K562 (cell line): ENCODE measurements at regions of chr6 and their contacts with region 1.

Region 1: DNA sequence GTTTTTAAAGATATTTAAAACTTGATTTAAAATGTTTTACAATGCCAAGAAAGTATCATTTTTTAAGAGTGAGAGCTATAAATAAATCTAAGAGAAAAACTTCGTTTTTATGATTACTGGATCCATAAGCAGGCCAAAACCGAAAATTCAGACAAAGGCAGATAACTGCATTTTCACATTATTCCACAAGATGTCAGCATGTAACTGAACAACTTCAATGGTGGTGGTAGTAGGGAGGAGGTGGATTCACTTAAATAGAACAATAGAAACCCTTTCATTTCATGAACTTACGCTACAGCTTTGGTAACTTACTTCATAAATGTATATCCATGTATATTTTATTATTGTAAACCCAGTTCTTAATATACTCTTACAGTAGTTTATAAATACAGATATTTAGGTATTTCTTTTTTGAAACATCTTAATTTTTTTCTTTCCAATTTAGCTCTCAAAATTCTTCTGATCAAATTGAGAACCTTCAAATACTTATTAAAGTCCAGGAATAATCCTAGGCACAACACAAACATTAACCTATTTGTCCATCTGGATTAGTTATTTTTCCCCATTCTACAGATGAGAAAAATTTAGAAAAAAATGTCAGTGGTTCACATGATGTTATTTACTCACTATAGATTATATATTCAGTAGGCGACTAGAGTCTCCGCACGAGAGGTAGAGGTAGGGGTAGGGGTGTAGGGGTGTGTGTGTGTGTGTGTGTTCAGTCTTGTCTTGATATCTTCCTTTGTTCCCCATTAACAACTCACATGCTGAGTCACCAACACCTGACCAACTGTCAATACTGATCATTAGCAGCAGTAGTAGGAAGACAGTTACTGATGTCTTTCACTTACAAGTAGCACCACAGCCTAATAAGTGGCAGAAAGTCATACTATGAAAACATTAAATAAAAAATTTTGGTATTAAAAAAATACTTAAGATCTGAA is 111.5 kb downstream of the ARHGAP18 start:
- DNase-seq: peak; percentile 52 to 75 (median 60)
- ATAC-seq: peak; percentile 91
- H3K4me3 ChIP-seq: no peak overlapping the region
- H3K27ac ChIP-seq: no peak overlapping the region
- H3K4me1 ChIP-seq: 0 out of 5 replicates have a peak, but pooled peaks cover 0 to 4% of the 10 kb centered on the region in 2 experiments
- H3K27me3 ChIP-seq: no peaks in the 10 kb centered on the region
- CTCF ChIP-seq: peak; percentile 70 to 91 (median 71); a peak in 5 of 6 replicates
- EP300 ChIP-seq: no peak
- POLR2A ChIP-seq: no peak
- RAD21 ChIP-seq: peak; percentile 97

Region 2: GRCh38 chr6:129635396-129636130 is 37.0 kb after region 1 on chr6:
- CTCF ChIA-PET with region 1: no interaction called
- POLR2A ChIA-PET with region 1: no interaction called
- in situ Hi-C with region 1: no loop called
- intact Hi-C with region 1: no loop called
- DNase-seq: no peak
- ATAC-seq: no peak
- H3K4me3 ChIP-seq: no peak overlapping the region
- H3K27ac ChIP-seq: no peak overlapping the region
- H3K4me1 ChIP-seq: no peaks in the 10 kb centered on the region; a peak in 1 of 5 replicates
- H3K27me3 ChIP-seq: no peaks in the 10 kb centered on the region
- CTCF ChIP-seq: no peak
- EP300 ChIP-seq: no peak
- POLR2A ChIP-seq: no peak
- RAD21 ChIP-seq: no peak

Region 3: DNA sequence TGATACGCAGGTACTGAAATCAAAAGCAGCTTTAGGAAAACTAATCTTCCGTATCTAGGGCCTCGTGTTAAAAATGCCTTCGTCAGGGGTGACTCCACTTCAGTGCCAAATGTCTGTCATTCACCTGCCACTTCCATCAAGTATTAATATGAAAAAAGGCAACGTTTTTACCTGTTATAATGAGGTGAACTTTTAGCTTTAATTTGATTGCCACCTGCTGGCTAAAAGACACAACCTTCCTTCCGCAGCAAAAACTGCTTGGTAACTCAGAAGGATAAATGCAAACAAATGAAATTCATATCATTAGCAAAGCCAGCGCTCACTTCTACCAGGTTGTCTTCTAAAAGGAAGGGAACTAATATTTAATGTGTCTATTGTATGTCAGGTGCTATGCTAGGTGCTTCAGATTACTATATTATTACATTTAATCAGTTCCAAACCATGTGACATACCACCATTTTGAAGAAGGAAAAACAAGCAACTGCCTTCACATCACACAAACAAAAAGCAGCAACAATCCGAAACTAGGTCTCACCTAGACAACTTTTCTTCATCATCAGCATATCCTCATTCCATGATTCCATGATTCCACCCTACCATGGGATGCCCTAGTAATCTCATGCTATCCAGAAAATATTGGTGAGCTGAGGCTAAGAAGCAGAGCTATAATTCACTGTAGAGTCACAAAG is 132.1 kb after region 1 on chr6:
- CTCF ChIA-PET with region 1: interaction called, 27 read pairs
- POLR2A ChIA-PET with region 1: interaction called, 3 read pairs
- in situ Hi-C with region 1: no loop called
- intact Hi-C with region 1: loop called (anchors 1 kb)
- DNase-seq: peak in 2 of 4 experiments; percentile 18 to 69
- ATAC-seq: peak; percentile 75
- H3K4me3 ChIP-seq: no peak overlapping the region
- H3K27ac ChIP-seq: peak overlapping the region; percentile 79
- H3K4me1 ChIP-seq: peaks cover 10 to 26% of the 10 kb centered on the region in 2 experiments; a peak in 4 of 5 replicates
- H3K27me3 ChIP-seq: no peaks in the 10 kb centered on the region
- CTCF ChIP-seq: peak; percentile 61 to 75 (median 62); a peak in 4 of 6 replicates
- EP300 ChIP-seq: no peak; the same call in 1 of the 2 replicates
- POLR2A ChIP-seq: no peak
- RAD21 ChIP-seq: peak; percentile 89 to 97

Region 4: GRCh38 chr6:129774697-129775447 is 176.4 kb after region 1 on chr6:
- CTCF ChIA-PET with region 1: interaction called, 7 read pairs
- POLR2A ChIA-PET with region 1: interaction called, 3 read pairs
- in situ Hi-C with region 1: no loop called
- intact Hi-C with region 1: loop called (anchors 1 kb)
- DNase-seq: peak; percentile 76 to 89 (median 80)
- ATAC-seq: peak; percentile 96
- H3K4me3 ChIP-seq: no peak overlapping the region
- H3K27ac ChIP-seq: no peak overlapping the region; the same call in 2 of the 3 replicates
- H3K4me1 ChIP-seq: peaks cover 4 to 6% of the 10 kb centered on the region in 2 experiments; a peak in 3 of 5 replicates
- H3K27me3 ChIP-seq: no peaks in the 10 kb centered on the region
- CTCF ChIP-seq: peak; percentile 90 to 97 (median 90)
- EP300 ChIP-seq: no peak
- POLR2A ChIP-seq: no peak
- RAD21 ChIP-seq: peak; percentile 75 to 89

Region 5: GRCh38 chr6:129875610-129876520 is 277.3 kb after region 1 on chr6:
- CTCF ChIA-PET with region 1: no interaction called
- POLR2A ChIA-PET with region 1: no interaction called
- in situ Hi-C with region 1: loop called (anchors 10 kb)
- intact Hi-C with region 1: no loop called
- DNase-seq: no peak
- ATAC-seq: no peak
- H3K4me3 ChIP-seq: no peak overlapping the region
- H3K27ac ChIP-seq: no peak overlapping the region
- H3K4me1 ChIP-seq: no peaks in the 10 kb centered on the region
- H3K27me3 ChIP-seq: no peaks in the 10 kb centered on the region
- CTCF ChIP-seq: no peak
- EP300 ChIP-seq: no peak
- POLR2A ChIP-seq: no peak
- RAD21 ChIP-seq: no peak

Region 6: DNA sequence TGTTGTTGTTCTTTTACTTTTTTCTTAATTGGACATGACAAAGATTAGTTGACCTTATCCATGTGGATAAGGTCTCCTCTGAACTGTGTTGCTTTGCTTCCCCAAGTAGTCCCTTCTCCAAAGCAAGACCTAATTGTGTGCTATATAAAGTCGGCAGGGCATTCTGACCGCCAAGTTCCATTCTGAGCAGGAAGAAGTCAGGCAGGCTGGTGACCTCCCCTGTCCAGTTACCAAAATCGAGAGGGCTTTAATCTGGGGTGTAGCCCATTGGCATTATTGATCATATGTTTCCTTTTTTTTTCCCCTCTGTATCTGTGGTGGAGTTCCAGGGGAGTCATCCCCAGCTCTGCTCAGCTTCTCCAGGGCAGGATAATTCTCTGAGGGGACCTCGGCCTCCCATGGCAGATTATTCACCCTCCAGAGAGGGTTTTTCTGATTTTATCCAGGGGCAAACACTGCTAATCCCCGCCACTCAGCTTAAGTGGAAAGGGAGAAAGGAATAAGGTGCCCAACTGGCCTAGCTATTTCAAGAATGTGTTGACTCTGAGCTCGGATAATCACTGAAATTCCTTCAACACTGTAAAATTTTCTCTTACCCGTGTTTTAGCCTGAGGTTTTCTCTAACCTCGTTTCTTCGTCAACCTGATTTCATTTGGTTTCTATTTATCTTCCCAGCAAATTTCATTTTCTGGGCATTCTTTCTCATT is 348.1 kb after region 1 on chr6:
- CTCF ChIA-PET with region 1: no interaction called
- POLR2A ChIA-PET with region 1: no interaction called
- in situ Hi-C with region 1: loop called (anchors 10 kb)
- intact Hi-C with region 1: no loop called
- DNase-seq: no peak
- ATAC-seq: peak; percentile 40; the same call in 2 of the 3 replicates
- H3K4me3 ChIP-seq: no peak overlapping the region
- H3K27ac ChIP-seq: no peak overlapping the region
- H3K4me1 ChIP-seq: no peaks in the 10 kb centered on the region; a peak in 1 of 5 replicates
- H3K27me3 ChIP-seq: peaks cover 3 to 8% of the 10 kb centered on the region in 2 experiments
- CTCF ChIP-seq: no peak
- EP300 ChIP-seq: no peak
- POLR2A ChIP-seq: no peak
- RAD21 ChIP-seq: no peak